ENCODE measurements at regions of chr12 and their contacts with region 1.

Region 1: DNA sequence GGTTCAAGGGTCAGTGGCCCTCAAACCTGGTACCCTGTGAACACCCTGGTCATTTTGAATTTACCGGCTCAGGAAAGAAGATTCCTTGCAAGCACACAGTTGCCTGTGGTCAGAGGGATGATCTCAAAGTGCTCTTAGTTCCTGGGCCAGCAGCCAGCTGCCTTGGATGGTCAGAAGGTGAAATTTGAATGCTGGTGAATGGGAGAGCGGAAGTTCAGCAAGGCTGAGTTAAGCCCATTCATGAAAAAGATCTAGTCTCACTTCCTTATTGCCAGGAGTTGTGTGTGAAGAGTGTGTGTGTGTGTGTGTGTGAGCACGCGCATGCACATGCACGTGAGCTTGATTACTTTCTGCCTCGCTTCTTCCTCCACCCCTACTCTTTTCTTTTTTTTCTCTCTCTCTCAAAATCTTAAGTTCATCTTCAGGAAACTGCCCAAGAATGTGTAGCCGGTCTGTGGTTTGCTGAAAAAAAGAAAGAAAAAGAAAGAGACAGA is 155.5 kb upstream of the CCND2 start:
- DNase-seq: peak; percentile 9
- H3K4me3 Mint-ChIP-seq: peak overlapping the region; percentile 62
- H3K27ac Mint-ChIP-seq: peak overlapping the region; percentile 82
- H3K4me1 Mint-ChIP-seq: peaks cover 66% of the 10 kb centered on the region
- H3K27me3 Mint-ChIP-seq: no peaks in the 10 kb centered on the region

Region 2: DNA sequence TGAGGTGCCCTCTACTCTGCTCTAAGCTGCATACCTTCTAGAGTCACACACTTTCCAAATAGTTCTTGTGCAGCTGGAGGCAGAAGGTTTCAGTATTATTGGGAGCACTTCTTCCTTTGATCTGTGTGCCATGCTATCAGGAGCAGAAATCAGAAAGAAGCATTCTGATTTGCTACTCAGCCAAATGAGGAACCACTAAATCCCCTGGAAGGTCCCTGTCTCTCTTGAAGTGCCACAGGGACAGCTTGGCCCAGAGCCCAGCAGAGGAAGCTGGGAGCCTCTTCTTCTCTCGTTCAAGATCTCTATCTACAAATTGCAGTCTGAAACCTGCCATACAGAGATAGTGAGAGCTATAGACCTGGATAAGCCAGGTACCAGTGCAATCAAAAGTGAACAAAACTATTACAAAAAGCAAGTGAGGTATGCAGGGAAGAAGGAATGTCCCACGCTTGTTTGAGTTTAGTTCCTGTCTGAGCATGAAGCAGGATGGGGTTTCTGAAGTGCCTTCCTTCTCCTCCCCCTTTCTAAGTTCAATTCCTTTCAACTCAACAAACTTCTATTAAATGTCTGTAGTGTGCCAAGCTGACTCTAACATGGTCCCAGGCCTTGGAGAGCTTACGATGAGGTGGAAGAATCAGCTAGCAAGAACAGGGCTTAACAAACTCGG is 144.0 kb before region 1 on chr12:
- intact Hi-C with region 1: loop called (anchors 1 kb)
- DNase-seq: no peak
- H3K4me3 Mint-ChIP-seq: peak overlapping the region; percentile 30
- H3K27ac Mint-ChIP-seq: peak overlapping the region; percentile 84
- H3K4me1 Mint-ChIP-seq: peaks cover 63% of the 10 kb centered on the region
- H3K27me3 Mint-ChIP-seq: peaks cover 2% of the 10 kb centered on the region

Region 3: GRCh38 chr12:4107436-4107878 is 10.6 kb before region 1 on chr12:
- intact Hi-C with region 1: loop called (anchors 1 kb)
- DNase-seq: peak; percentile 75
- H3K4me3 Mint-ChIP-seq: peak overlapping the region; percentile 10
- H3K27ac Mint-ChIP-seq: peak overlapping the region; percentile 73
- H3K4me1 Mint-ChIP-seq: peaks cover 53% of the 10 kb centered on the region
- H3K27me3 Mint-ChIP-seq: peaks cover 4% of the 10 kb centered on the region

Region 4: GRCh38 chr12:4135919-4136605 is 18.0 kb after region 1 on chr12:
- intact Hi-C with region 1: loop called (anchors 1 kb)
- DNase-seq: no peak
- H3K4me3 Mint-ChIP-seq: no peak overlapping the region
- H3K27ac Mint-ChIP-seq: peak overlapping the region; percentile 78
- H3K4me1 Mint-ChIP-seq: peaks cover 56% of the 10 kb centered on the region
- H3K27me3 Mint-ChIP-seq: no peaks in the 10 kb centered on the region

Region 5: DNA sequence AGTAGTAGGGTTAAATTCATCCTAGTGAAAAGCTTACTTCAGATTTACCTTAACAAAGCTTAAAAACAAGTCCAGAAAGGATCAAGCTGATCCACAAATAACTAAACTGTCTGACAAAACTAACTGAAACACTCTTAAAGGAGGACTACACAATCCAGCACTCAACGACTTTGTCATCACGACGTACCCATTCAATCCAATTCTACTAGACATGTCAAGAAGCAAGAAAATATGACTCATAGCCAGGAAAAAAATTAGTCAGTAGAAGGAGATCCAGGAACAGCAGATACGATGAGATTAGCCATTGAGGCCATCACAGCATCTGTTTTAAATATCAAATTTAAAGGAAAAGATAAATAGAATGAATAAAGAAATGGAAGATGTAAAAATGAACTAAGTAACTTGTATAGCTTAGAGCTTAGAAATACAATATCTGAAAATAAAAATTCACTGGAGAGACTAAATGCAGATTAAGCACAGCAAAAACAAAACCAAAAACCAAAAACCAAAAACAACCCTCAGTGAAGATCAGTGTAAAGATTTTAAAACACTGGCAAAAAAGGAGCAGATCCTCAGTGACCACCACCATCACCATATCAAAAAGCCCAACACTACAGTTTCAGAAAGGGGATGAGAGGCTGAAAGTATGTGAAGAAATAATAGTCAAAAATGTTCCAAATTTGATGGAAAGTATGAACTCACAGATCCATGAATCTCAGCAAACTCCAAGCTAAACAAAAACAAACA is 60.5 kb after region 1 on chr12:
- intact Hi-C with region 1: loop called (anchors 1 kb)
- DNase-seq: no peak
- H3K4me3 Mint-ChIP-seq: peak overlapping the region; percentile 11
- H3K27ac Mint-ChIP-seq: peak overlapping the region; percentile 93
- H3K4me1 Mint-ChIP-seq: peaks cover 23% of the 10 kb centered on the region
- H3K27me3 Mint-ChIP-seq: no peaks in the 10 kb centered on the region

Region 6: DNA sequence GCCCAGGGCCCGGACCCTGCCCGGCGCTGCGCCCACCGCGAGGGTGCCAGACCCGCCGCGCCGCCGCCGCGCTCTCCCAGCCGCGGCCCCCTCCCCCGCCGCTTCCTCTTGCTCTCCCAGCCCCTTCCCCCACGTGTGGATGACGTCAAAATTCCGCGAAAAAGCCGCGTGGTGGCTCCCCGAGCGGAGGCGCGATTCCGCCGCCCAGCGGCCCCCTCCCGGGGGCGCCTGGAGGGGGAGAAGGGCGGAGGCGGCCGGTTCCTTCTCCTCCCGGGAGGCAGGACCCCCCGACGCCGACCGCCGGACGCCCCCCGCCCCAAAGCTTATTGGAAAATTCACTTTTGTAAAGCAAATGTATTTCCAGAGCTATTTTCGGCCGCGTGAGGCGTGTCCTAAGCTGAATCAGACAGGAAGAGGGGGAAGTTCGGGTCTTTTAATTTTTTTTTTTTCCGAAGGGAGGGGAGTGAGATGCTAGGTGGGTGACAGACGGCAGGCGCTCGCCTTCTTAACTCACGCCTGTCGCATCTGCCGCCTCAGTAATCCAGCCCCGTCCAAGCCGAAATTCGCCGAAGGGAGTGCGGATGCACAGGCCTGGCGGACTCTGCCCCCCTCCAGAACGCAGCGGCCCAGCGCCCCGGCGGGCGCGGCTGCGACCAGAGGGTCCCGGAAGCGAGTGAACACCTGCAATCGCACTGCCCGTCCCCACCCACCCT is 151.4 kb after region 1 on chr12:
- intact Hi-C with region 1: loop called (anchors 1 kb)
- DNase-seq: peak; percentile 91
- H3K4me3 Mint-ChIP-seq: peak overlapping the region; percentile 95
- H3K27ac Mint-ChIP-seq: peak overlapping the region; percentile 90
- H3K4me1 Mint-ChIP-seq: peaks cover 26% of the 10 kb centered on the region
- H3K27me3 Mint-ChIP-seq: peaks cover 13% of the 10 kb centered on the region

Region 7: GRCh38 chr12:4280351-4281163 is 162.5 kb after region 1 on chr12:
- intact Hi-C with region 1: no loop called
- DNase-seq: no peak
- H3K4me3 Mint-ChIP-seq: peak overlapping the region; percentile 58
- H3K27ac Mint-ChIP-seq: peak overlapping the region; percentile 75
- H3K4me1 Mint-ChIP-seq: peaks cover 59% of the 10 kb centered on the region
- H3K27me3 Mint-ChIP-seq: no peaks in the 10 kb centered on the region